Activated CD4-positive, alpha-beta memory T cell treated with anti-CD3 and anti-CD28 coated beads, Interleukin-2, amount 10 ng/mL, durations not matched to agents 7 days and 5 days (primary cell): ENCODE measurements at regions of chr18 and their contacts with region 1.

Region 1: GRCh38 chr18:9971313-9971920 is 57.6 kb downstream of the VAPA start:
- DNase-seq: peak; percentile 73
- H3K4me3 Mint-ChIP-seq: no peak overlapping the region
- H3K27ac Mint-ChIP-seq: no peak overlapping the region
- H3K4me1 Mint-ChIP-seq: peaks cover 4% of the 10 kb centered on the region
- H3K27me3 Mint-ChIP-seq: peaks cover 32% of the 10 kb centered on the region

Region 2: GRCh38 chr18:9992300-9992972 is 21.0 kb after region 1 on chr18:
- CTCF ChIA-PET with region 1: no interaction called
- POLR2A ChIA-PET with region 1: no interaction called
- DNase-seq: no peak
- H3K4me3 Mint-ChIP-seq: no peak overlapping the region
- H3K27ac Mint-ChIP-seq: no peak overlapping the region
- H3K4me1 Mint-ChIP-seq: no peaks in the 10 kb centered on the region
- H3K27me3 Mint-ChIP-seq: no peaks in the 10 kb centered on the region

Region 3: DNA sequence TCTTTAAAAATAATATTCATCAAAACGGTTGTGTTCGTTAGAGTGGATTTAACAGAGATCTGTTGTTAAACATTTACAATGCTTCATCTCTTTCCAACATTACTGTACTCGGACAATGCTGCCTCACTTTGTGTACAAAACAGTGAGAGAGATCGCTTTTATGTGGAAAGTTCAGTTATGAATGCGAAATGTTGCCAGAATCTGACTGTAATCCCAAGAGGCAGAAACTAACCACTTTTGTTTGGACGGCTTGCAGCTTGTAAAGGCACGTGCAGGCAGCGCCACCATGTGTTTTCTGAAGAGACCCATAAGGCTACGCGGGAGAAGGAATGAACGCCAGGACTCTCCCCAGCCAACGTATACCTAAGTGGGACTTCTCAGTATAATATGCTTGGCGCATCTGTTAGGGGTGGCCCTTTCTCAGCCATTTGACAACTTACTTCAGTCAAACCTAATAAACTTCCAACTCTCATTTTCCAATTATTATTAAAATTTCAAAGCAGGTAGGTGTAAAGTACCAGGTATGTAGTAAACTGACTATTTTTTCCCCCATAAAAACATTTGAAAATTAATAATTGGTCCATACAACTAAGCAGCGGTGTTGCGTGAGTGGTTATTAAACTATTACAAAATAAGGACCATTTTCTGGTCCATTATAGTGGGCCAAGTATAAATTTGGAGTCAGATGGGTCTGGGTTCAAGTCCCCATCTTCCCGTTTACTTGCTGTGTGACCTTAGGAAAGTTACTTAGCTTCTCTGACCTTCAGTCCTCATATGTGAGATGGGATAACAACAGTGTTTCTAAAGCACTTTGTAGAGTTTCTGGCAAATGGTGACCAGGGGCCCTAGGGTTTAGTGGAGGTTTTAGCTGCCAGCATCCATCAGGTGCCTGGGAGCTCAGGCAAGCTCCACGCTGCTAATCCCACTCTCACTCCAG is 548.9 kb after region 1 on chr18:
- CTCF ChIA-PET with region 1: interaction called, 25 read pairs
- POLR2A ChIA-PET with region 1: no interaction called
- DNase-seq: peak; percentile 65
- H3K4me3 Mint-ChIP-seq: no peak overlapping the region
- H3K27ac Mint-ChIP-seq: no peak overlapping the region
- H3K4me1 Mint-ChIP-seq: peaks cover 17% of the 10 kb centered on the region
- H3K27me3 Mint-ChIP-seq: peaks cover 46% of the 10 kb centered on the region